RWPE1 (cell line): ENCODE measurements at regions of chr3 and their contacts with region 1.

Region 1: DNA sequence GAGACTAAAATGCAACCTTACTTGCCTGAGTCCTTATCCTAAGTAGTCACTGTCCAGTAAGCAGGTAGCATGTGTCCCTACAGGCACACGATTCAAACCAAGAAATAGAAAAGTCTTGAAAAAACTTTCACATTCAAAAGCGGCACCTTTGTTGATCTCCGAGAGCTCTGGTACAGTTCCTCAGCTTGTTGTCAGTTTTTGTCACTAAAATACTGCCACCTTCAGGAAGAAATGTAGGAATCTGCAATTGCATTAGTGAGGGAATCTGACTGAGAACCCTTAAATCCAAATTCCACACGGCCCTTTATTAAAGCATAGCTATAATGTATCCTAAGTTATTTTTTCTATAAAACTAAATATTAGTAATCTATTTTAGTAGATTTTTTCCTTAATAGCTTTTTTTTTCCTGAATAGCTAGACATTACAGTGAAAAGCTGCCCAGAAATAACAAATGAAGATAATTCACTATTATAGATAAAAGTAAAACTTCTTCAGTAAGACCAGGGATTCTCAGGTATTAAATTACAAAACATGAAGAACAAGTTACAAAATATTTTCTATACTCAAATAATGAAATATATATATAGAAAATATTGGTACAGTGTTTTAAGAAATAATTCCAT is 44.0 kb downstream of the CCDC54 start:
- DNase-seq: peak; percentile 54
- H3K27ac ChIP-seq: no peak overlapping the region
- CTCF ChIP-seq: peak; percentile 74

Region 2: GRCh38 chr3:107184375-107184774 is 236.9 kb before region 1 on chr3:
- CTCF ChIA-PET with region 1: no interaction called
- POLR2A ChIA-PET with region 1: no interaction called
- DNase-seq: no peak
- H3K27ac ChIP-seq: no peak overlapping the region
- CTCF ChIP-seq: no peak

Region 3: DNA sequence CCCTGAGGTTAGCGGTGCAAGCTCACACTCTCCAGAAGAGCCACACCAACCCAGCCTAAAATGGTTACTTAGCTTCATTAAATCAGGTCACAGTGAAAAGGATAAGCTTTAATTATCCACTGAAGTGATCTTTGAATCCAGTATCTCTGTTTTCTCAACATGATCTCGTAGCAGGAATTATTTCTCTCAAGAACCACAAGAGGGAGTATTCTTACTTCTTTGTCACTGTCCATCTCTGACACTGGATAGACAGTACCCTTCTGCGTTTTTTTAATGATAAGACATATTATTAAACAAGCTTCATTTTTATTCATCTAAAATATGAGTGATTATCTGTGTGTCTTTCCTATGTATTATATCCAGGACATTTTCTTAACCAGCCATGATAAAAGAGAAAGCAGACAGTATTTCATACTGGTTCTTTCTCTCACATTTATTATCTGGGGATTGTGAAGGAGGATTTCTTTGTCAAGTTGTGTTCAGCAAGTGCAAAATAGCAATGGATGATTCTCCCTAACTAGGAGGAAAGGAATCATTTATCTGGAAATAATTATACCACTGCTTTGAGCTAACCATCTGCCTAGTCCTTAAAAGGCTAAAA is 149.4 kb before region 1 on chr3:
- CTCF ChIA-PET with region 1: interaction called, 13 read pairs
- POLR2A ChIA-PET with region 1: no interaction called
- DNase-seq: peak; percentile 41
- H3K27ac ChIP-seq: no peak overlapping the region
- CTCF ChIP-seq: peak; percentile 80

Region 4: GRCh38 chr3:107660306-107660976 is 239.2 kb after region 1 on chr3:
- CTCF ChIA-PET with region 1: no interaction called
- POLR2A ChIA-PET with region 1: no interaction called
- DNase-seq: no peak
- H3K27ac ChIP-seq: no peak overlapping the region
- CTCF ChIP-seq: peak; percentile 79